ENCODE measurements at regions of chr4 and their contacts with region 1.

Region 1: GRCh38 chr4:69322055-69322454 is 41.8 kb downstream of the UGT2B28 start:
- DNase-seq: peak; percentile 13
- H3K4me3 ChIP-seq: no peak overlapping the region
- CTCF ChIP-seq: no peak

Region 2: GRCh38 chr4:69617083-69617694 is 295.1 kb after region 1 on chr4:
- in situ Hi-C with region 1: loop called (anchors 10 kb)
- DNase-seq: peak; percentile 56
- H3K4me3 ChIP-seq: no peak overlapping the region
- CTCF ChIP-seq: peak; percentile 56